ENCODE measurements at regions of chr14 and their contacts with region 1.

Region 1: DNA sequence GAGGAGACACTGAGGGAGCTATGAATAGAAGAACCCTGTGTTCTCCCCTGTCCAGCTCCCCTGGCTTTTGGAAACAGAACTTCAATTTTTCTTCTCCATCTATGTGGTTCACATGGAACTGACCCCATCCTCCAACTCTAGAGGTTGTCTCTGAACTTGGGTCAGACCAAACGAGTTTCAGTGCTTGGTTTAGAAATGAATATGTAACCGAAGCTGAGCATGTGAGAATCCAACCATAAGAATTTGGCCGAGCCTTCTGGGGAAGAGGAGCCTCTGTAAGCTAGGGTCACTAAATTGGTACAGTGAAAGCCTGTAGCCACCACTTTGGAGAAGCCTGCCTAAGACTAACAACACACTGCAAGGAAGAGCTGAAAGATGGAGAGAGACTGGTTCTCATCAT is 464.4 kb downstream of the ZFP36L1 start:
- DNase-seq: no peak
- ATAC-seq: no peak

Region 2: DNA sequence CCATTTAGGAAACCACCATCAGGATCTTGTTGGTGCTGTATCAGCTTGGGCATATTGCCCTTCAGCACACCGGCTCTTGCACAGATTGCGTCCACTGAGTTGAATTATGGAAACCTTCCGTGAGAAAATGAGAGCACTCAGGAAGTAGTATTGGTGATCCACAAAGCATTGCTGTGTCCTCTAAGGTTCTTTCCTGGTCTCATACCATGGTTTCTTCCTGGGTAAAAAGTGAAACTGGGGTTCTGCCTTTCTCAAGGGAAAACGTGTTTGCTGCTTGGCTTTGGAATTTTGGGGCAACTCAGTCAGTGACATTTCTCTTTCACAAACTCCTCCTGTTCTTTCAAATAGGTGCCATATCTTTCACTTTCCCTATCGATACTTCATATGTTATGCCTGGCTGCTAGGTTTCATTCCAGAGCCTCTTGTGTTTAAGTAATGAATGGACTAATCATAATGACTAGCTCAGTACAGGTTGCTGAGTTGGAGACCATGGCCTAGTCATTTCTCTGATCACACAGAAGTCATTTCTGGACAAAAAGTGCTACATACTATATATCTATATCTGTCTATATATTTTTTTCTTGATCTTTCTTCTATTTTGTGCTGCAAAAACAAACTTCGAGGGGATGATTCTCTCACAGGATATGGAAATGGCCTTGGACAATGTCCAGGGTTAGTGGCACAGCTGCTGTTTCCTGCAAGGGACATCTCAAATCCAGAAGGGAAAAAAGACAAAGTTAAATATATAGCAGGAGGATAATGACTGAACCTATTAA is 41.0 kb after region 1 on chr14:
- intact Hi-C with region 1: loop called (anchors 5 kb)
- DNase-seq: no peak
- ATAC-seq: no peak

Region 3: DNA sequence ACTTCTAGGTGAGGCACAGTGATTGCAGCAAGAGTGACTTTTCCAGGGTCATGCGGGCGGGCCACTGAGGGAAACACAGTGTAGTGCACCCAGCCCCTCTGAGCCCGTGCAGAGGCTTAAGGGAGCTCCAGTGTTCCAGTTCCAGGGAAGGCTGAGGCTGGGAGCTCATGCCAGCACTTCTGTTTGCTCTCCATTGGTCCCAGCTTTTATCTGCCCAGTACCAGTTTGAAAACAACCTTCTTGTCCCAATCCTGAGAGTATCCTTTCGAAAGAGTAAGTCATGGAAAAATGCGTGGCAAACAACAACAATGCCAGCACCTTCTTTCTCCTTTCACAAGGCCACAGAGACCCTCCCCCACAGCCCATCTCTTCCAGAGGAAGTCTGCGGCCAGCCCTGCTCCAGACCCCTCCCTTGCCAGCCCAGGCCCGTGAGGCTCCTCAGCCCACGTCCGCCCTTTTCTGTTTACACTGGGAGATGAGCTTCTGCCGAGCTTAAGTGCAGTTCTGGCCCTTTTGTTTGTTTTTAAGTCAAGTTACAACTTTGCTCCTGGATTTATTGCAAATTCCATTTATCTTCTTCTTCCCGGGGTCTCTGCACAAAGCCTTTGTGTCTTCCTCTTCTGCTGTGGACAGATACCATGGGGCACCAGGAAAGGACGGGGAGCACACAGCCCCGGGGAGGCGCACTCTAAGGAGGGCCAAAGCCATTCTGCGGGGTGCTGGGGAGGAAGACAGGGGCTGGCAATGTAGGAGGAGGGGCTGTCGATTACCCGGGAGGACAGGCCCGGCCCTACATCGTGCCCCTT is 278.8 kb after region 1 on chr14:
- intact Hi-C with region 1: no loop called
- DNase-seq: no peak
- ATAC-seq: peak; percentile 50